ENCODE measurements at regions of chr4 and their contacts with region 1.

Region 1: GRCh38 chr4:87543835-87544461 is 14.8 kb upstream of the SPARCL1 start:
- DNase-seq: peak; percentile 77
- H3K4me3 ChIP-seq: no peak overlapping the region
- H3K27ac ChIP-seq: peak overlapping the region in 3 of 4 donors; percentile 82 to 87 (median 83)
- H3K4me1 ChIP-seq: peaks cover 19 to 49% (median 38%) of the 10 kb centered on the region in 4 donors
- H3K27me3 ChIP-seq: no peaks in the 10 kb centered on the region
- CTCF ChIP-seq: peak; percentile 63 to 76 (median 75)
- EP300 ChIP-seq: no peak
- POLR2A ChIP-seq: no peak

Region 2: GRCh38 chr4:87078987-87079486 is 464.9 kb before region 1 on chr4:
- intact Hi-C with region 1: no loop called
- DNase-seq: no peak
- H3K4me3 ChIP-seq: peak overlapping the region in 3 of 4 donors; percentile 14 to 40 (median 30)
- H3K27ac ChIP-seq: peak overlapping the region; percentile 79 to 84 (median 82)
- H3K4me1 ChIP-seq: peaks cover 82 to 100% (median 98%) of the 10 kb centered on the region in 4 donors
- H3K27me3 ChIP-seq: no peaks in the 10 kb centered on the region
- CTCF ChIP-seq: no peak
- EP300 ChIP-seq: no peak
- POLR2A ChIP-seq: no peak

Region 3: DNA sequence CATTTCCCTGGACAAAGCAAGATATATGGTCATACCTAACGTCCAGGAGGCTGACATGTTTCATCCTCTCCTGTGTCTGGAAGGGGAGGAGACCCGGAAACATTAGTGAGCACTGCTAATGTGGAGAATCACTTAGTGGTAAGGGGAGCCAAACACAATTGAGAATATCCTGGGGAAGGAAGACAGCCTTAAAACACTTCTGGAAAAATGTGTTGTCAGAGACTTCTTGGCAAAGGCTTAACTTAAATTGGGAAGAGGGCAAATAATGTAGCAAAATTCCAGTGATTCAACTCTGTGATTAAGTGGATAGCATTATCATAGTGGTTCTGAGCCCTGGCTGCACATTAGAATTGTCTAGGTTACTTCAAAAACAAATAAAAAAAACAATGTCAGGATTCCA is 54.3 kb before region 1 on chr4:
- intact Hi-C with region 1: loop called (anchors 5 kb)
- DNase-seq: no peak
- H3K4me3 ChIP-seq: no peak overlapping the region
- H3K27ac ChIP-seq: peak overlapping the region; percentile 70 to 79 (median 76)
- H3K4me1 ChIP-seq: peaks cover 27 to 63% (median 60%) of the 10 kb centered on the region in 4 donors
- H3K27me3 ChIP-seq: no peaks in the 10 kb centered on the region
- CTCF ChIP-seq: no peak
- EP300 ChIP-seq: no peak
- POLR2A ChIP-seq: no peak

Region 4: DNA sequence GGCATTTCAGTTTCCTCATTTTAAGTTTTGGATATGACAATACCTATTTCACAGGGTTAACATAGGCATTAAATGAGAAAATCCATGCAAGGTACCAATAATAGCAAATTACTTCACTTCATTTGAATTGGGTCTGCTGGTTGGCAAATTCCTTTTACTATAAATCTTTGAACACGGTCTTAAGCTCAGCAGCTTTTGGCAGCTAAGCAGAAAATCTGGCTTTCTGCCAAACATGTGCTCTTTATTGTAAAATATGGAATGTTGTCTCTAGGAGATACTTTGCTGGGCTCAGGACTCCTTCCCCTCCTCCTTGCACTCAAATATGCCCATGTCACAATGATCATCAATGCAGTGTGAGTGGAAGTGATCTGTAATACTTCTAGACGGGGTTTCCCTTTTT is 89.3 kb after region 1 on chr4:
- intact Hi-C with region 1: loop called (anchors 10 kb)
- DNase-seq: no peak
- H3K4me3 ChIP-seq: no peak overlapping the region
- H3K27ac ChIP-seq: no peak overlapping the region
- H3K4me1 ChIP-seq: peaks cover 0 to 14% (median 10%) of the 10 kb centered on the region in 4 donors
- H3K27me3 ChIP-seq: no peaks in the 10 kb centered on the region
- CTCF ChIP-seq: no peak
- EP300 ChIP-seq: no peak
- POLR2A ChIP-seq: no peak

Region 5: GRCh38 chr4:87838890-87839591 is 295.1 kb after region 1 on chr4:
- intact Hi-C with region 1: loop called (anchors 2 kb)
- DNase-seq: no peak
- H3K4me3 ChIP-seq: no peak overlapping the region
- H3K27ac ChIP-seq: peak overlapping the region in 1 of 4 donors; percentile 33
- H3K4me1 ChIP-seq: peaks cover 8 to 9% (median 8%) of the 10 kb centered on the region in 4 donors
- H3K27me3 ChIP-seq: no peaks in the 10 kb centered on the region
- CTCF ChIP-seq: peak; percentile 73 to 80 (median 74)
- EP300 ChIP-seq: no peak
- POLR2A ChIP-seq: no peak